ENCODE measurements at regions of chr1 and their contacts with region 1.

Region 1: GRCh38 chr1:232630047-232630893 is at the start of gene SIPA1L2:
- DNase-seq: peak; percentile 97
- H3K4me3 Mint-ChIP-seq: peak within 1 kb of the TSS; percentile 97
- H3K27ac Mint-ChIP-seq: peak within 1 kb of the TSS; percentile 76
- H3K4me1 Mint-ChIP-seq: peaks cover 33% of the 10 kb centered on the region
- H3K27me3 Mint-ChIP-seq: no peaks in the 10 kb centered on the region
- CTCF ChIP-seq: peak; percentile 72
- total RNA-seq, gene SIPA1L2: 15.2 and 18.3 TPM in 2 replicates

Region 2: DNA sequence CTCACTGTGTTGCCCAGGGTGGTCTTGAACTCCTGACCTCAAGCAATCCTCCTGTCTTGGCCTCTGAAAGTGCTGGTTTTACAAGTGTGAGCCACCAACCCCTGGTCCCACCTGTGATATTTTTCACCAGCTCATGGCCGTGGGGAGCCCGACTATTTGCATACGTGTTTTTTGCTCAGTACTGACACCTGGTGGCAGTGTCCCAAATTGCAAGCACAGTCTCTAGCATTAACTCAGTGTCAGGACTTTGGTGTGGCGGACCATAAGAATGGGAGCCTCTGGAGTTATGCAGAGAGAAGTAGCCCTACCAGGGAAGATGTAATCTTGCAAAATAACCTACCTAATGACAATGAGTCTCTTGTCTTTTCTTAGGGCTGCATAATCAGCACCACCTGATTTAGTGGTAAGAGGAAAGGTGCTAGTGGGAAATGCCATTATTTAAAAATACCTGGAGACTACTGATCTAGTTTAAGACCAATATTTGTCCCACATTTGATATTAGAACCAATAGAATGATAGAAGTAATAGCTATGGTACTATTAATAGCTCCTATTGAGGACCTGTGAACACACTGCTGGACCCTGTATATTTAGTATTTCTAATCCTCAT is 698.3 kb before region 1 on chr1:
- CTCF ChIA-PET with region 1: interaction called, 8 read pairs
- POLR2A ChIA-PET with region 1: interaction called, 11 read pairs
- intact Hi-C with region 1: no loop called
- DNase-seq: peak; percentile 58
- H3K4me3 Mint-ChIP-seq: no peak overlapping the region
- H3K27ac Mint-ChIP-seq: no peak overlapping the region
- H3K4me1 Mint-ChIP-seq: peaks cover 36% of the 10 kb centered on the region
- H3K27me3 Mint-ChIP-seq: no peaks in the 10 kb centered on the region
- CTCF ChIP-seq: peak; percentile 90

Region 3: GRCh38 chr1:232334246-232335210 is 295.7 kb before region 1 on chr1:
- CTCF ChIA-PET with region 1: interaction called, 7 read pairs
- POLR2A ChIA-PET with region 1: interaction called, 5 read pairs
- intact Hi-C with region 1: loop called (anchors 10 kb)
- DNase-seq: peak; percentile 99
- H3K4me3 Mint-ChIP-seq: no peak overlapping the region
- H3K27ac Mint-ChIP-seq: no peak overlapping the region
- H3K4me1 Mint-ChIP-seq: peaks cover 26% of the 10 kb centered on the region
- H3K27me3 Mint-ChIP-seq: peaks cover 18% of the 10 kb centered on the region
- CTCF ChIP-seq: no peak

Region 4: GRCh38 chr1:232528472-232529089 is 101.7 kb before region 1 on chr1:
- CTCF ChIA-PET with region 1: interaction called, 37 read pairs
- POLR2A ChIA-PET with region 1: interaction called, 36 read pairs
- intact Hi-C with region 1: loop called (anchors 1 kb)
- DNase-seq: no peak
- H3K4me3 Mint-ChIP-seq: no peak overlapping the region
- H3K27ac Mint-ChIP-seq: peak overlapping the region; percentile 78
- H3K4me1 Mint-ChIP-seq: peaks cover 52% of the 10 kb centered on the region
- H3K27me3 Mint-ChIP-seq: no peaks in the 10 kb centered on the region
- CTCF ChIP-seq: no peak

Region 5: DNA sequence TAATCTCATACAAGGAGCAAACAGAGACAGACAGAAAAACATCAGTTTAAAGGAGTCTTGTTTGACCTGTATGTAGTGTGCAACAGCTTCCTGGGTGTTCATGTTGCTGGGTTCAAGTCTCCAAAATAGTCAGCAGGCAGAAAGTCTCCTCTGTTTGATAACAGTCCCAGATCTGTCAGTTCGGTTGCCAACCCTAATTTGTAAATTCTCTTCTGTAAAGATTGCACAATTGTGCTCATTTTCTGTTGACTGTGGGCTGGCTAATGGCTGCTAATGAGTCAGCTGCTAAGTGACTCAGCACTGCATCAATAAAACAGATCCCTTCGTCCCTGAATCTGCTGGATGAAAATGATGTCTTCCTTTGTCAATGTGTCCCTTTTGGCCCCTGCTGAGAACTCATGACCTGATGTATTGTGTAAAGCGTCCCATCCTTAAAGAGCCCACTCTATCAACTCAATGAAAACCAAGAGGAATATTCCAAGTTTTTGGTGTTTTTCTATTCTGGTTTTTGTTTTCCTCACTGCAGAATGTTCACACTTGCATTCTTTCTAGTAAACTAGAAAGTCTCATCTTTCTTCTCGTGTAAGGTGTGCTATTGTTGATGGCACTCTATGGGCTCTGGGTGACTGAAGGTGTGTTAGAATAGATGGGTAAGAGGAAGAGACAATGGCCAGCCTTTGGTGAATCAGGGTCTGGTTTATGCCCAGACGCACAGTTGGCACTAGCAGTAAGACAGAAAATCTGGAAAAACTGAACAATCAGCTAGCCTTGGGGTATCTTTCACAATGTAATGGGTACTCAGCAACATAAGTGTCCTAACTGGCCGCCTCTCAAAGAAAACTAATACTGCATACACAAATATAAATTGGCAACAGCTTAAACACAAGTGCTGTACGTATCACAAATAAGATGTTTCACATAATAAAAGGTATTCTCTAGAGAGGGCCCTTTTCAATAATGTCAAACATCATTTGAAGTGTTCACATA is 74.7 kb after region 1 on chr1:
- CTCF ChIA-PET with region 1: interaction called, 7 read pairs
- POLR2A ChIA-PET with region 1: interaction called, 11 read pairs
- intact Hi-C with region 1: no loop called
- DNase-seq: peak; percentile 98
- H3K4me3 Mint-ChIP-seq: peak overlapping the region; percentile 30
- H3K27ac Mint-ChIP-seq: peak overlapping the region; percentile 76
- H3K4me1 Mint-ChIP-seq: peaks cover 48% of the 10 kb centered on the region
- H3K27me3 Mint-ChIP-seq: no peaks in the 10 kb centered on the region
- CTCF ChIP-seq: no peak

Region 6: GRCh38 chr1:232904566-232904965 is 274.3 kb after region 1 on chr1:
- CTCF ChIA-PET with region 1: no interaction called
- POLR2A ChIA-PET with region 1: no interaction called
- intact Hi-C with region 1: no loop called
- DNase-seq: peak; percentile 54
- H3K4me3 Mint-ChIP-seq: no peak overlapping the region
- H3K27ac Mint-ChIP-seq: no peak overlapping the region
- H3K4me1 Mint-ChIP-seq: no peaks in the 10 kb centered on the region
- H3K27me3 Mint-ChIP-seq: no peaks in the 10 kb centered on the region
- CTCF ChIP-seq: no peak

Region 7: GRCh38 chr1:233055879-233056641 is 425.8 kb after region 1 on chr1:
- CTCF ChIA-PET with region 1: no interaction called
- POLR2A ChIA-PET with region 1: no interaction called
- intact Hi-C with region 1: no loop called
- DNase-seq: no peak
- H3K4me3 Mint-ChIP-seq: no peak overlapping the region
- H3K27ac Mint-ChIP-seq: no peak overlapping the region
- H3K4me1 Mint-ChIP-seq: peaks cover 5% of the 10 kb centered on the region
- H3K27me3 Mint-ChIP-seq: no peaks in the 10 kb centered on the region
- CTCF ChIP-seq: no peak

Region 8: DNA sequence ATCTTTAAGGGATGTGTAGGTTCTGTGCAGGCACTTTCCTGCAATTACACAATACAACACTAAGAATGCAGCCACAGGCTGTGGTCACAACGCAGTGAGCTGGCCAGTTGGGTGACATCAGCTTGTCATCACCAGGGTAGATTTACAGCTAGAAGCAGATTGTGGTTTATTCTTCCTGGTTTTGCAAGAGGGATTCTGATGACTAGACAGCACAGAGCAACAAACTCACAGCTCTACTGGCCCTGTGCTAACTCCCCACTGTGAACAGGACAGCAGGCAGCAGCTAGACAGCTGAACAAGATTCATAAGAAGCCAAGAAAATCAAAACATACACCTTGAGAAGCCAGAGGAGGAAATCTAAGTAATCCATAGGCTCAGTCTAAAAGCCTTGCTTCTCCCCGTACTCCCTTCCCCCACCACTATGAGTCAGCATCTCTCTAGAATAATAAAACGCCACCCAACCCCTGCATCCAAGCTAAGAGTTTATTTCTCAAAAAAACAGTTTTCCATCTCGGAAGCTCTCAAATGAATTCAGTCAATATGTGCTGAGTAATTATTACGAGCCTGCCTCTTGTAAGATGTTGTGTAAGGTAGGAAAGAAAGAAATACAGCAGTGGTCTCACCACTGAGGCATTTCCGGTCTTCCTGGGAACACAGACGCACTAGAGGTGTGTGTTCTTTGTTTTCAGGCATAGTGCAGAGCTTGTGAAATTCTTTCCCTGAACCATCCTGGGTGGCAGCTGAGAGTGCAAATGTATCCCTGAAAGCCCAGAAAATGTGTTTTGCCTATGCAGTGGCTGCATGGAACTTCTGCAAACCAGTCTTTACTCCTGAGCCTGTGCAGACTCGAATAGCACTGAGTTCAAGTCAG is 483.0 kb after region 1 on chr1:
- CTCF ChIA-PET with region 1: no interaction called
- POLR2A ChIA-PET with region 1: interaction called, 11 read pairs
- intact Hi-C with region 1: loop called (anchors 1 kb)
- DNase-seq: peak; percentile 100
- H3K4me3 Mint-ChIP-seq: peak overlapping the region; percentile 62
- H3K27ac Mint-ChIP-seq: peak overlapping the region; percentile 90
- H3K4me1 Mint-ChIP-seq: peaks cover 63% of the 10 kb centered on the region
- H3K27me3 Mint-ChIP-seq: no peaks in the 10 kb centered on the region
- CTCF ChIP-seq: no peak

Measured in MCF 10A (cell line).